Activated naive CD4-positive, alpha-beta T cell treated with anti-CD3 and anti-CD28 coated beads for 36 hours (primary cell): ENCODE measurements at regions of chr9 and their contacts with region 1.

Region 1: GRCh38 chr9:32378993-32379729 is 5.3 kb upstream of the ACO1 start:
- DNase-seq: peak; percentile 67
- H3K4me3 Mint-ChIP-seq: no peak overlapping the region
- H3K27ac Mint-ChIP-seq: no peak overlapping the region
- H3K4me1 Mint-ChIP-seq: peaks cover 15% of the 10 kb centered on the region
- H3K27me3 Mint-ChIP-seq: peaks cover 3% of the 10 kb centered on the region

Region 2: DNA sequence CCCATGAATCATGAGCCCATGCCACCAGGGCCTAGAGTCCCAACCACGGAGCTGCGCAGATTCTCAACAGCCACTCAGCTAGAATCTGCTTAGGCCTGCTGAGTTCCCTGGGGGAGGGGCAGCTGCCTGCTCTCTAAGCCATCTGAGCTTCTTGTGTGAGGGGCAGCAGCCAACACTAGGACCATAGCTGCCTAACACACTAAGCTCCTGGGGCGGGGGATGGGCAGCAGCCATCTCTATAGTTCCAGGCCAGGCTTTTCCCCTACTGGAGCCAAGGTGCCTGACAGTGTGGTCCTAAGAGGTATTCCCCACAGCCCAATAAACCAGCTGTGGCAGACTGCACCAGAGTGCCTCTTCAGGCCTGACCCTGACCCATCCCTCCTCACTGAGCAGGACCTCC is 250.6 kb before region 1 on chr9:
- CTCF ChIA-PET with region 1: no interaction called
- intact Hi-C with region 1: no loop called
- DNase-seq: no peak
- H3K4me3 Mint-ChIP-seq: no peak overlapping the region
- H3K27ac Mint-ChIP-seq: no peak overlapping the region
- H3K4me1 Mint-ChIP-seq: no peaks in the 10 kb centered on the region
- H3K27me3 Mint-ChIP-seq: peaks cover 7% of the 10 kb centered on the region

Region 3: GRCh38 chr9:32398207-32398606 is 19.0 kb after region 1 on chr9:
- CTCF ChIA-PET with region 1: interaction called, 10 read pairs
- intact Hi-C with region 1: loop called (anchors 2 kb)
- DNase-seq: no peak
- H3K4me3 Mint-ChIP-seq: no peak overlapping the region
- H3K27ac Mint-ChIP-seq: no peak overlapping the region
- H3K4me1 Mint-ChIP-seq: no peaks in the 10 kb centered on the region
- H3K27me3 Mint-ChIP-seq: no peaks in the 10 kb centered on the region

Region 4: GRCh38 chr9:32508728-32509127 is 129.6 kb after region 1 on chr9:
- CTCF ChIA-PET with region 1: interaction called, 14 read pairs
- intact Hi-C with region 1: no loop called
- DNase-seq: no peak
- H3K4me3 Mint-ChIP-seq: no peak overlapping the region
- H3K27ac Mint-ChIP-seq: no peak overlapping the region
- H3K4me1 Mint-ChIP-seq: peaks cover 38% of the 10 kb centered on the region
- H3K27me3 Mint-ChIP-seq: no peaks in the 10 kb centered on the region

Region 5: GRCh38 chr9:32550562-32551433 is 171.6 kb after region 1 on chr9:
- CTCF ChIA-PET with region 1: interaction called, 10 read pairs
- intact Hi-C with region 1: loop called (anchors 1 kb)
- DNase-seq: peak; percentile 93
- H3K4me3 Mint-ChIP-seq: peak overlapping the region; percentile 95
- H3K27ac Mint-ChIP-seq: peak overlapping the region; percentile 99
- H3K4me1 Mint-ChIP-seq: peaks cover 43% of the 10 kb centered on the region
- H3K27me3 Mint-ChIP-seq: no peaks in the 10 kb centered on the region

Region 6: DNA sequence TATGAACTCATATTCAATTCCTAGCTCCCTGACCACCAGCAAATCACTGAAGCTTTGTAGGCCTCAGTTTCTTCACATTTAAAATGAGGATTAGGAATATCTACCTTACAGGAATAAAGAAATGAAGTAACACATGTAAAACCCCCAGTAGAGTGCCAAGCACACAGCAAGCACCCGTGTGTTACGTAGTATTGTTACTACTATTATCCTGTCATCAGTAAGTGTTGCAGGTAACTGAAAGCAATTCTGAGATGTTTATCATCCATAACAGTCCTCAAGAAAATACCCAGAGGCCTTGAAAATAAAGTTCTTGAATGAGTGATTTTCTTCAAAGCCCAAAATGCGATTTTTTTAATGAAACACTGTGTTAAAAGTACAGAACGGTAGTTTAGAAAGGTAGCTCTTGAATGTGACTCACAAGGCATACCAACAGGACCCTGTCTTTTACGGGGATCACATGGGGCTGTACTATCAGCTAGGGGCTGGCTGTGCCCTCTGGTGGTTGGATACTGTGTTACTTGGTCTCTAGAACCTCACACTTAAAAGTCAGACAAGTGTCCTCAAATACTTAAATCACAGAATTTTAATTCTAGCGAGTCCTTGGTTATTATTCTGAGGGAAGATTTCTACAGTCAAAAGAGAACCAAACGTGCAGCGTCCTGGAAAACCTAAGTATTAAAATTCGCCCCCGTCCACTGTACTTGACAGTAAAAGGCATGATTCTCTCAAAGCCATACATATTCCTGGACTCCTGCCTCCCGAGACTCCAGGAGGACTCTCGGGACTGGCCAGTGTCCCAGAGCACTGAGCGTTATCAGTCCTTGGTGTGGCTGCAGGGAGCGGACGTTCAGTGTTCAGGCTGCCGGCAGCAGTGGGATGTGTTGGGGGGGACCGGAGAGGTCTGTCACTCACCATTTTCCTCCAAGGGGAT is 193.1 kb after region 1 on chr9:
- CTCF ChIA-PET with region 1: interaction called, 322 read pairs
- intact Hi-C with region 1: loop called (anchors 1 kb)
- DNase-seq: peak; percentile 88
- H3K4me3 Mint-ChIP-seq: peak overlapping the region; percentile 88
- H3K27ac Mint-ChIP-seq: peak overlapping the region; percentile 92
- H3K4me1 Mint-ChIP-seq: peaks cover 16% of the 10 kb centered on the region
- H3K27me3 Mint-ChIP-seq: no peaks in the 10 kb centered on the region

Region 7: DNA sequence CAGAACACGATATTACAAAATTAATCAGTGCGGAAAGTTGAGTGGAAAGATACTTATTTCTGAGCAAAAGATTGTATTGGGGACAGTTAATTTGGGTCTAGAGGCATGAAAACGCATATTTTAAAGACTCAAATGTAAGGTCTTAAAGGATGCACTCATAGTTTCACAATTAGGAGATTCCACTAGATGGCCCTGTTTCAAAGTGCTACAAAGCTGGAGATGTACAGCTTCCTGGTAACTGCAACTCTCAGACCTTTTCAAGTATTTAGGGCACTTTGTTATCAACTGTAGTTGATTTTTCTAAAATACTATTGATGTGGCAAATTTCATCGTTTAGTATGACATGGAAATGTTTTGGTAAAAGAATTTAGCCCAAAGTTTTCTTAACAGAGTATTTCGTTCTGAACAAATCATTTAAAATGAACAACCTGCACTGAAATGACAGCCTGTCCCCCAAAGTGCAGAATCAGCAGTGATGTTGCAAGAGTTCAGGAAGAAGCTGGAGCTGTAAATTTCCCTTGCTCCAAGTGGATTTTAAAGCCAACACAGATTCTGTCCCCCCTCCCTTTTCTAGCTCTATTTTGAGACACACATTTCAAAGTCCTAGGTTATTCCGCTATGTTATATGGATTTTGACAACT is 210.0 kb after region 1 on chr9:
- CTCF ChIA-PET with region 1: interaction called, 34 read pairs
- intact Hi-C with region 1: no loop called
- DNase-seq: no peak
- H3K4me3 Mint-ChIP-seq: no peak overlapping the region
- H3K27ac Mint-ChIP-seq: no peak overlapping the region
- H3K4me1 Mint-ChIP-seq: no peaks in the 10 kb centered on the region
- H3K27me3 Mint-ChIP-seq: peaks cover 16% of the 10 kb centered on the region

Region 8: GRCh38 chr9:32968101-32969011 is 589.2 kb after region 1 on chr9:
- CTCF ChIA-PET with region 1: interaction called, 29 read pairs
- intact Hi-C with region 1: loop called (anchors 1 kb)
- DNase-seq: peak; percentile 78
- H3K4me3 Mint-ChIP-seq: no peak overlapping the region
- H3K27ac Mint-ChIP-seq: no peak overlapping the region
- H3K4me1 Mint-ChIP-seq: no peaks in the 10 kb centered on the region
- H3K27me3 Mint-ChIP-seq: no peaks in the 10 kb centered on the region